Activated naive CD4-positive, alpha-beta T cell treated with anti-CD3 and anti-CD28 coated beads for 36 hours (primary cell): ENCODE measurements at regions of chr2 and their contacts with region 1.

Region 1: GRCh38 chr2:73614105-73614504 is 28.1 kb downstream of the NAT8 start:
- DNase-seq: peak; percentile 58
- H3K4me3 Mint-ChIP-seq: no peak overlapping the region
- H3K27ac Mint-ChIP-seq: no peak overlapping the region
- H3K4me1 Mint-ChIP-seq: peaks cover 11% of the 10 kb centered on the region
- H3K27me3 Mint-ChIP-seq: no peaks in the 10 kb centered on the region

Region 2: DNA sequence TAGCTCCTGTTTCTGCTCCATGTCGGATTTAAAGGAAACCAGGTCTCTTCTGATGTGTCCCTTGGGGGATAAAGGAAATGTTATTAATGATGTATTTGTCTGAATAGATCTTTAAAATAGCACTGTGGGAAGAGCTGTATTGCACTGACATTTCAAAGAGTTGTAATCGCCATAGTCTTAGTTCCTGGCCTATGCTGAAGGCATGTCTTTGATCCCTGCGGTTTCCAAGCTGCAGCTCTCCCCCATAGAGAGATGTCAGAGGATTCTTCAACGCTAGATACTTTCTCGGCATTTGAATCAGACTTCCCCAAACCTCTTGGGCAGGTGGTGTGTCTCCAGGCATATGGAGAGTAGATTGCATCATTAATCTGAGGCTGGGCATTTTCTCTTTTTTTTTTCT is 12.3 kb before region 1 on chr2:
- CTCF ChIA-PET with region 1: no interaction called
- intact Hi-C with region 1: loop called (anchors 1 kb)
- DNase-seq: no peak
- H3K4me3 Mint-ChIP-seq: no peak overlapping the region
- H3K27ac Mint-ChIP-seq: no peak overlapping the region
- H3K4me1 Mint-ChIP-seq: peaks cover 6% of the 10 kb centered on the region
- H3K27me3 Mint-ChIP-seq: no peaks in the 10 kb centered on the region

Region 3: DNA sequence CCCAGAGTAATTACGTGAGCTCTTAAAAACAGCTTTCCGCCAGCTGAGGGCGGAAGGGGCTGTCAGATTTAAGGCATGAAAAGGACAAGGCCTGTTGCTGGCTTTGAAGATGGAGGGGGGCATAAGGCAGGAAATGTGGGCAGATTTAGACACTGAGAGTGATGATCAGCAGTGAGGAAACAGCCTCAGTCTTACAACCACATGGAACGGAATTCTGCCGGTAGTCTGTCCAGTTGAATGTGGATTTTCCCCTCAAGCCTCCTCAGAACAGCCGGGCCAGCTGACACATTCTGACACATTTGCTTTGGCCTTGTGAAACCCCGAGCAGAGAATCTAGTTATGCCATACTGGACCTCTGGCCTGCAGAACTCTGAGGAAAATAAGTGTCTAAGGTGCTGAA is 1360.9 kb after region 1 on chr2:
- CTCF ChIA-PET with region 1: no interaction called
- intact Hi-C with region 1: no loop called
- DNase-seq: no peak
- H3K4me3 Mint-ChIP-seq: no peak overlapping the region
- H3K27ac Mint-ChIP-seq: no peak overlapping the region
- H3K4me1 Mint-ChIP-seq: peaks cover 7% of the 10 kb centered on the region
- H3K27me3 Mint-ChIP-seq: no peaks in the 10 kb centered on the region